ENCODE measurements at regions of chr9 and their contacts with region 1.

Region 1: DNA sequence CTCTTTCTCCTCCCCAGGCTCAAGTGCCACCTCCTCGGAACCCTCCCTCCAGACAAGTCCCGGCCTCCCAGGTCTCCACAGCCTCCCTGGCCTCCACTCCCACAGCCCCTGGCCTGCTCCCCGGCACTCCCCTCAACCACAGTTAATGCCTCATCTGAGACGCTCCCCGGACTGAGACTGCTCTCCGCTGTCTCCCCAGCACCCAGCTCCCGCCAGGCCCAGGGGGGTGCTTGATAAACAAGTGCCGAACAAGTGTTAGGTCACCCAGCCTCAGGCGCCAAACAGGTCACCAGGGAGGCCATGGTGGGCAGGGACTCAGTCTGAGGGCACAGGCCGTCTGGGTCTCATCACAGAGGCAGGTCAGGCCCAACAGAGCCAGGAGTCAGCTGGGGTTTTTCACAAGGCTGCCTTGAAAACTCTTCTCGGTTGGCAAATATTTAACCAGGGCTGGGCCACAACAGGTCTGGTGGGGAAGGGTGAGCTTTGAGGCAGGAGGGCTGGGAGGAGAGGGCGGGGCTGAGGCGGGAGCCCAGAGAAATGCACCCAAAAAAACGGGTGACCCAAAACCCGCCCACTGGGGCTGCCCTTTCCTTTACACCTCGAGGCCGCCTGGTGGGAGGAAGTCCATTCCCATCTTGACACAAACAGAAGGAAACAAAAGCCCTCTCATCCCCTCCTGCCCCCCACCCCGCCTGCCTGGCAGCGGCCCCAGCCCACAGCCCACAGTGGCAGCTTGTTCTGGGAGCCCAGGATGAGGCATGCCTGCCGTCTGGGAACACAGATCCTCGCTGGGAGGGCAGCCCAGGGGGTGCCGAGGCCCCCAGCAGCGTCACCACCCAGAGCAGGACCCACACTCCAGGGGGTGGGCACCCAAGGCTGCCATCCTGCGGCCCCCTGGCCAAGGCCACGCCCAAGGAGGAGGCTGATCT is 66.6 kb upstream of the STXBP1 start:
- DNase-seq: peak; percentile 96 to 97
- H3K4me3 ChIP-seq: peak overlapping the region; percentile 46; the same call in 1 of the 2 replicates
- H3K27ac ChIP-seq: peak overlapping the region; percentile 90
- H3K4me1 ChIP-seq: peaks cover 72% of the 10 kb centered on the region
- H3K27me3 ChIP-seq: no peaks in the 10 kb centered on the region
- CTCF ChIP-seq: 0 out of 2 replicates have a peak, but pooled peaks have one; percentile 23

Region 2: DNA sequence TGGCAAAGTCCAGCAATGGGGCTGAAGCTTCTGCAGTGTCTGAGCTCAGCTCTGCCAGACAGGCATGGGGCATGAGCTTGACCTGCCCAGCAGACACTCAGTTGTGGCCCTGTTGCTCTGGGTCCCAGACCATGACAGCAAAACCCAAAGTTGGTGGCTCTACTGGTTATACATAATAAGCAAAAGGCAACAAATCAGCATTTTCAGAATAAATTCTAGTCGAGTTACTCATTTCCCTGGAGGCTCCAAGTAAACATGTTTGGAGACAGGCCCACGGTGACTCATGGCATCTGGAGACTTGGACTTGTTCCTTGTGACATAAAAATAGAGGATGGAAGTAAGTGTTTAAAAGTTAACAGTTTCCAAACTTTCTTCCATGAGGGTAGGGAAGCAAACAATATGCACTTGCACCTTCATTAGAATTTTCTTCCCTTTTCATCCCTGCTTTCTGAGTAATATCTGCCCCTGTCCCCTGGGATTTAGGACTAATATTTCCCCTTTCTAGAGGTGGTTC is 208.7 kb before region 1 on chr9:
- CTCF ChIA-PET with region 1: no interaction called
- POLR2A ChIA-PET with region 1: no interaction called
- intact Hi-C with region 1: no loop called
- DNase-seq: peak; percentile 76 to 95
- H3K4me3 ChIP-seq: peak overlapping the region; percentile 5; the same call in 1 of the 2 replicates
- H3K27ac ChIP-seq: peak overlapping the region; percentile 57
- H3K4me1 ChIP-seq: peaks cover 47% of the 10 kb centered on the region
- H3K27me3 ChIP-seq: no peaks in the 10 kb centered on the region
- CTCF ChIP-seq: no peak

Region 3: GRCh38 chr9:127437497-127438264 is 107.8 kb before region 1 on chr9:
- CTCF ChIA-PET with region 1: no interaction called
- POLR2A ChIA-PET with region 1: no interaction called
- intact Hi-C with region 1: no loop called
- DNase-seq: no peak
- H3K4me3 ChIP-seq: no peak overlapping the region
- H3K27ac ChIP-seq: no peak overlapping the region
- H3K4me1 ChIP-seq: no peaks in the 10 kb centered on the region
- H3K27me3 ChIP-seq: no peaks in the 10 kb centered on the region
- CTCF ChIP-seq: no peak

Region 4: GRCh38 chr9:127503947-127504782 is 41.3 kb before region 1 on chr9:
- CTCF ChIA-PET with region 1: no interaction called
- POLR2A ChIA-PET with region 1: no interaction called
- intact Hi-C with region 1: loop called (anchors 2 kb)
- DNase-seq: peak; percentile 60 to 85
- H3K4me3 ChIP-seq: no peak overlapping the region
- H3K27ac ChIP-seq: no peak overlapping the region
- H3K4me1 ChIP-seq: no peaks in the 10 kb centered on the region
- H3K27me3 ChIP-seq: no peaks in the 10 kb centered on the region
- CTCF ChIP-seq: peak; percentile 85

Region 5: DNA sequence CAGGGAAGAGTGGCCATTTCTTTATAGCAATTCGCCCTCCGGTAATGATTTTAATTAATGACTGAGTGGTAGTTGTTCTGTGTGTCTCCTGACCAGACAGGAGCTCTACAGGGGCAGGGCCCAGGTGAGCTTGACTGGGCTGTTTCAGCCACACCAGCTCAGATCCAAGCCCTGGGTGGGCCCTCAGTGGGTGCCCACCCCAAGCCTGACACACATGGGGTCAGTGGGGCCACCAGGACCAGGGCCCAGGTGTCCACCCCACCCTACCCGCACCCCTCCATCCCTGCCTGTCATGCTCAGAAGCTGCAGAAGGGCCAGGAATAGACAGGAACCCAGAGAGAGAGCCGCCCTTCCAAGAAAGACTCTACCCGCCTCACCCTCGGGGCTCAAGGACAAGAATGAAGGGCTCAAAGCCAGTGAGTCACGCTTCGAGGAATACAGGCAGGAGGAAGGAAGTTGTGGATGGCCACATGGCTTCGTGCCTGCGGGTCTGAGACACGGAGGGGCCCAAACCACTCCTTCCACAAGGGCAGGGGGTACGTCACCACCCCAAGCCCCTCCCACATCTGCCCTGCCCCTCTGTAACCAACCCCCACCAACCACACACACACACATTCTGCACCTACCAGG is 10.4 kb after region 1 on chr9:
- CTCF ChIA-PET with region 1: no interaction called
- POLR2A ChIA-PET with region 1: interaction called, 10 read pairs
- intact Hi-C with region 1: loop called (anchors 1 kb)
- DNase-seq: peak; percentile 94
- H3K4me3 ChIP-seq: no peak overlapping the region
- H3K27ac ChIP-seq: peak overlapping the region; percentile 74
- H3K4me1 ChIP-seq: peaks cover 69% of the 10 kb centered on the region
- H3K27me3 ChIP-seq: no peaks in the 10 kb centered on the region
- CTCF ChIP-seq: no peak

Region 6: GRCh38 chr9:127561619-127562500 is 16.4 kb after region 1 on chr9:
- CTCF ChIA-PET with region 1: interaction called, 3 read pairs
- POLR2A ChIA-PET with region 1: interaction called, 10 read pairs
- intact Hi-C with region 1: loop called (anchors 1 kb)
- DNase-seq: peak; percentile 99 to 100
- H3K4me3 ChIP-seq: peak overlapping the region; percentile 8; the same call in 1 of the 2 replicates
- H3K27ac ChIP-seq: peak overlapping the region; percentile 86
- H3K4me1 ChIP-seq: peaks cover 95% of the 10 kb centered on the region
- H3K27me3 ChIP-seq: no peaks in the 10 kb centered on the region
- CTCF ChIP-seq: no peak